Activated B cell treated with CpG ODN at 0.5 μM for 24 hours (primary cell): ENCODE measurements at regions of chr7 and their contacts with region 1.

Region 1: DNA sequence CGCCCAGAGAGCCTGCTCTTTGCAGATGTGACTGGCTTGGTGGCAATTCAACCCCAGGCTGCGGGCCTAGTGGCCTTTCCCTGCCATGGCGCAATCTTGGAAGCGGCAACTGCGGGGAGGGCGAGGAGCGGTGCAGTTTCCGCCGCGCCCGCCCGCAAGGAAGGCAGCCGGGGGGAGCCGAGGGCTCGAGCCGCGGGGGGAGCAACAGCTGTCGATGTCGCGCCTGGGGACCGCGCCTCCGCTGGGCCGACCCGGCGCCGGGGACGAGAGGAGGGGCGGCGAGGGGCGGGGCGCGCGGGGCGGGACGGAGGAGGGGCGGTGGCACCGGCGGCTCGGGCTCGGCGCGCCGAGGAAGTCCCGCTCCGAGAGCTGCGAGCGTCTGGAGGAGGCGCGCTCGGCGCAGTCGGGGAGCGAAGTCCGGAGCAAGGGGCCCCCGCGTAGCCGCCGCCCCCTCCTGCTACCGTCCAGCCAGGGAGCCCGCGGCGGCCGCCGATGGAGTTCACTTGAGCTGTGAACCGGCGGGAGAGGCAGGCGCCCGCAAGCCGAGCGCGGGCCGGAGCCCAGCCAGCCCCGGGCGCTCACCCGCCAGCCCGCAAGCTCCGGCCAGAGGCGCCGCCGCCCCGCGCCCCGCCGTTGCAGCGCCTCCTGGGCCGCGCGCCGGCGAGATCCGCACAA is 438.1 kb upstream of the GALNT17 start:
- DNase-seq: peak; percentile 36
- ATAC-seq: peak; percentile 74
- H3K4me3 Mint-ChIP-seq: peak overlapping the region; percentile 79
- H3K27ac Mint-ChIP-seq: no peak overlapping the region
- H3K4me1 Mint-ChIP-seq: peaks cover 15% of the 10 kb centered on the region
- H3K27me3 Mint-ChIP-seq: peaks cover 21% of the 10 kb centered on the region
- CTCF ChIP-seq: no peak

Region 2: DNA sequence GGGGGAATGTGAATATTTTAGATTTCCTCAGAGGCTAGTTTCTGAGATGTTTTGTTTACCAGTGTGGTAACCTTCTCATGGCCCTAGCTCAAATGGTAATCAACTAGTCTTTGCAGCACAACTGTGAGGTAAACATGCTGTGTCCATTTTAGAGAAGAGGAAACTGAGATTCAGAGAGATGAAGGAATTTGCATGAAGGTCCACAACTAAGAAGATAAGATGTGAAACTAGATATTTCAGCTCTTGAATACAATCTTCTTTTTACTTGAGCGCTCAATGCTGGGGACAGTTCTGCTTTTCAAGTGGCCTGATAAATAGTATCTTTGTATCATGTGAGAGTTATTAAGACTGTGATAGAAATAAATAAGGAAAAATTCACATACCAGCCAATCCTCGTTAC is 850.2 kb before region 1 on chr7:
- CTCF ChIA-PET with region 1: no interaction called
- POLR2A ChIA-PET with region 1: no interaction called
- intact Hi-C with region 1: loop called (anchors 10 kb)
- DNase-seq: no peak
- ATAC-seq: peak; percentile 37
- H3K4me3 Mint-ChIP-seq: peak overlapping the region; percentile 12
- H3K27ac Mint-ChIP-seq: peak overlapping the region; percentile 59
- H3K4me1 Mint-ChIP-seq: peaks cover 76% of the 10 kb centered on the region
- H3K27me3 Mint-ChIP-seq: no peaks in the 10 kb centered on the region
- CTCF ChIP-seq: no peak

Region 3: DNA sequence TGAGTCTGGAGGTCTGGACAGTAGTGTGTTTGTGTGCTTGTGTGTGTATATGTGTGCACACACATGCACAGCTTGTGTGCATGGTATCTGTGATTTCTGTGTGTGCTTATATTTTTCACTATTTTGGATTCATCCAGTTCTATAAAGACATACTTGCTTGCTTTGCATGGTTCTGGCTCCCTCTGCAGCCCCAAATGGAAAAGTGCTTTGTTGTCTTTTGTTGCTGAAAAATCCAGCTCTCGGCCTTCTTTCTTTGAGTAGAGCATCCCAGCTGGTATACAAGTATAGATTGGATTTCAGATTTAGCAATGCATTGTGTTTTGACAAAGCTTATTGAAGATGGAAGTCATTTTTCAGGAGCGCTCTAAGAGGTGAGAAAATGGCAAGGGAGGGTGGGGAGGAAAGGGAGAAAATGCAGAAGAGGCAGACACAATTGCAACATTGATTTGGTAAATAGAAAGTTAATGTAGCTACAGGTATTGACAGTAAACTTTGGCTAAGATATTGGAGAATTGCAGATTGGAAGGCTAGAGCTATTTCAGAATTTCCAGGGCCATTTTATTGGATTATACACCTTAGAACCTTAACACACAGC is 761.7 kb before region 1 on chr7:
- CTCF ChIA-PET with region 1: interaction called, 7 read pairs
- POLR2A ChIA-PET with region 1: no interaction called
- intact Hi-C with region 1: loop called (anchors 10 kb)
- DNase-seq: no peak
- ATAC-seq: no peak
- H3K4me3 Mint-ChIP-seq: no peak overlapping the region
- H3K27ac Mint-ChIP-seq: no peak overlapping the region
- H3K4me1 Mint-ChIP-seq: peaks cover 15% of the 10 kb centered on the region
- H3K27me3 Mint-ChIP-seq: no peaks in the 10 kb centered on the region
- CTCF ChIP-seq: no peak

Region 4: DNA sequence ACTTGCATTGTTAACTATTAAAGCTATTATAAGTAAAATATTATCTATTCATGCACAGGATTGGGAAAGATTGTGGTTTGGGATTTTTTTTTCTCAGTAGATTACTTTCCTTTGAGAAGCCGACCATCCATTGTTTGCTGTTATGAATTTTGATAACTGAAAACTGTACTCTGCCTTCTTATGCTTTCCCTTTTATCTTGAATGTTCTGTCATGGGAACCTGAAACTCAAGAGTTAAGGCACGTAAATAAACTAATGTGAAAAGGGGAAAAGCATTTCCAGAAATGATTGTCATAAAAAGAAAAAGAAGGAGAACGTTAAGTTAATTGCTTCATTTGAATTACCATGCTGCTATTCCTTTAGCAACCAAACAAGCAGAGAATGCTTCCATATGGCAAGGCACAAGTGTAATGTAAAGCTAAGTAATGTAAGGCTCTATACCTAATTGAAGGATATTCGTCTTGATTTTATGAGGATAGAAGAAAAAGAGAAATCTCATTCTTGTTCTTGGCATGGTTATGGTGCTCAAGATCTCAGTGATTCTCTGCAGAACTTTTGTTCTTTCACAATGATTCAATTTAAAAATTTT is 724.8 kb before region 1 on chr7:
- CTCF ChIA-PET with region 1: no interaction called
- POLR2A ChIA-PET with region 1: no interaction called
- intact Hi-C with region 1: no loop called
- DNase-seq: no peak
- ATAC-seq: no peak
- H3K4me3 Mint-ChIP-seq: no peak overlapping the region
- H3K27ac Mint-ChIP-seq: no peak overlapping the region
- H3K4me1 Mint-ChIP-seq: peaks cover 25% of the 10 kb centered on the region
- H3K27me3 Mint-ChIP-seq: no peaks in the 10 kb centered on the region
- CTCF ChIP-seq: no peak

Region 5: GRCh38 chr7:70165477-70166170 is 528.2 kb before region 1 on chr7:
- CTCF ChIA-PET with region 1: no interaction called
- POLR2A ChIA-PET with region 1: no interaction called
- intact Hi-C with region 1: loop called (anchors 10 kb)
- DNase-seq: no peak
- ATAC-seq: no peak
- H3K4me3 Mint-ChIP-seq: no peak overlapping the region
- H3K27ac Mint-ChIP-seq: no peak overlapping the region
- H3K4me1 Mint-ChIP-seq: no peaks in the 10 kb centered on the region
- H3K27me3 Mint-ChIP-seq: no peaks in the 10 kb centered on the region
- CTCF ChIP-seq: no peak

Region 6: DNA sequence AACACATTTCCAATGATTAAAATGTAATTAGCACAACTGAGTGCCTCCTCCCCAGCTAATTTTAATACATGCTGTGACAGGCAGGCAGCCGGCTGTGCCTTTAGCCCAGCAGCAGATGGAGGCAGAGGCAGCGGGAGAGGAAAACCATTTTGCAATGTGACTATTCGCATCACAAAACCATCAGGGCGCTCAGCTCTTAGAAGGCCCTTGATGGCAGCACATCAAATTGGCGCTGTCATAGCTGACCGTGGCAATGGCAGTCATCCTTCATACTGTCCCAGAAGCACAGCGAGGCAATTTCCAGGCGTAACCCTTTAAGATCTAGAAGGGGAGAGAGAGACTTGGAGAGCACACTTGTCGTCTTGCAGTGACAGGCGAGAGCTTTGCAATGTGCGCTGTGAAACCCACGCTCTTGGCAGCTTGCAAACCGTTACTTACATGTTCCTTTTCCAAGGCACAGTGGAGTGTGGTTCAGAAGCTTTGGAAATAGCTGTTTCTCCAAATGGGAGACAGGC is 276.6 kb before region 1 on chr7:
- CTCF ChIA-PET with region 1: no interaction called
- POLR2A ChIA-PET with region 1: no interaction called
- intact Hi-C with region 1: loop called (anchors 10 kb)
- DNase-seq: no peak
- ATAC-seq: no peak
- H3K4me3 Mint-ChIP-seq: no peak overlapping the region
- H3K27ac Mint-ChIP-seq: no peak overlapping the region
- H3K4me1 Mint-ChIP-seq: peaks cover 28% of the 10 kb centered on the region
- H3K27me3 Mint-ChIP-seq: no peaks in the 10 kb centered on the region
- CTCF ChIP-seq: no peak